ENCODE measurements at regions of chr21 and their contacts with region 1.

Region 1: GRCh38 chr21:14956807-14957206 is 108.0 kb downstream of the NRIP1 start:
- DNase-seq: no peak
- ATAC-seq: no peak

Region 2: DNA sequence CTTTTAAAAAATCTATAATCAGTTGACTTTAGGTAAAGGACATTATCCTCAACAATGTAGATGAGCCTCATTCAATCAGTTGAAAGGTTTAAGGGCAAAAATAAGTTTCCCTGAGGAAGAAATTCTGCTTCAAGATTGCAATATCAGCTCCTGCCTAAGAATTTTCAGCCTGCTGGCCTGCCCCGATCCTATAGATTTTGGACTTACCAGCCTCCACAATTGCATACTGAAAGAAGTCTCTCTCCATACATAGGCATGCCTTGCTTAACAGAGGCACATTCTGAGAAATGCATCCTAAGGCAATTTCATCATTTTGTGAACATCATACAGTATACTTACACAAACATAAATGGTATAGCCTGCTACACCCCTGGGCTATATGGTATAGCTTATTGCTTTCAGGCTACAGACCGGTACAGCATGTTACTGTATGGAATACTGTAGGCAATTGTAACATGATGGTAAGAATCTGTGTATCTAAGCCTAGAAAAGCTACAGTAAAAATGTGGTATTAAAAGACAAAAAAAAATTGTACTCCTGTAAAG is 66.7 kb before region 1 on chr21:
- intact Hi-C with region 1: loop called in 1 of 2 experiments (anchors 10 kb)
- DNase-seq: no peak
- ATAC-seq: no peak

Region 3: DNA sequence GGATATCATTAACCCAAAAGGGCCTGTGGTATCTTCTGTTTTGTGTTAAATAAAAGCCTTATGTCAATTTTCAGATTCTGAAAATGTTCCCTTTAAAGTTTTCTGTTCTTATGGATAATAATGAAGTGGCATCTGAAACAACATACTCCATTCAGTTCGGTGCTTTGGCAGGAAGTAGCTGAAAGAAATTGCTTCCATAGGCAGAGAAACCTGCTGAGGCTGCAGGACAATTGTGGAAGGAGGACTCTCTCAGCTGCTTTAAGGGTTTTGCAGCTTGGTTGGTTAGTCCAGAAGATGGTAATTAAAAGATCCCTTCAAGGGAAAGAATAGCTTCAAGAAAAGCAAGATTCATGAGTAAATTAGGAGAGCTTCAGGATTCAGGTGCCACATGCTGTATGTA is 138.5 kb after region 1 on chr21:
- intact Hi-C with region 1: no loop called
- DNase-seq: no peak
- ATAC-seq: no peak

Measured in left cardiac atrium (tissue), 4 donors.